Activated CD8-positive, alpha-beta T cell treated with anti-CD3 and anti-CD28 coated beads, Interleukin-2, amount 10 ng/mL, durations not matched to agents 7 days and 5 days (primary cell): ENCODE measurements at regions of chr7 and their contacts with region 1.

Region 1: GRCh38 chr7:6026011-6026819 is 5.0 kb upstream of the ANKRD61 start:
- DNase-seq: peak; percentile 86
- ATAC-seq: peak; percentile 99
- H3K4me3 Mint-ChIP-seq: peak overlapping the region; percentile 68
- H3K27ac Mint-ChIP-seq: peak overlapping the region; percentile 89
- H3K4me1 Mint-ChIP-seq: peaks cover 25% of the 10 kb centered on the region
- H3K27me3 Mint-ChIP-seq: no peaks in the 10 kb centered on the region

Region 2: GRCh38 chr7:5709347-5709950 is 316.8 kb before region 1 on chr7:
- CTCF ChIA-PET with region 1: no interaction called
- POLR2A ChIA-PET with region 1: no interaction called
- DNase-seq: no peak
- ATAC-seq: no peak
- H3K4me3 Mint-ChIP-seq: no peak overlapping the region
- H3K27ac Mint-ChIP-seq: no peak overlapping the region
- H3K4me1 Mint-ChIP-seq: no peaks in the 10 kb centered on the region
- H3K27me3 Mint-ChIP-seq: no peaks in the 10 kb centered on the region

Region 3: DNA sequence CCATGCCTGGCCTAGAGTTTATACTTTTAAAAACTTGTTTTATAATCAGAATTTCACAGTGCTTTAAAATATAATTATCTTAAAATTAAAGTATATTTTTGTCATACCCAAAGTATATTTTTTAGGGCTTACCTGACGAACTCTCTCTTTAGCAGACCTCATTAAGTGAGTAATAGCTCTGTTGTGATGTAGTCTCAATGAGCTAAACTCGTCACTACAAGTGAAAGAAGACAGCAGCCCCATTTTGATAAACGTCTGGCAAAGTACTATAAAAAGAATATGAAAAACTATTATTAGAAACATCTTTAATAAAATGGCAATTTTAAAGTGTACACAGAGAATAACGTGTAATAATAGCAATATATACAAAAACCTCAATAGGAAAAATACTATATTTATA is 23.6 kb after region 1 on chr7:
- CTCF ChIA-PET with region 1: interaction called, 11 read pairs
- POLR2A ChIA-PET with region 1: no interaction called
- DNase-seq: no peak
- ATAC-seq: no peak
- H3K4me3 Mint-ChIP-seq: no peak overlapping the region
- H3K27ac Mint-ChIP-seq: no peak overlapping the region
- H3K4me1 Mint-ChIP-seq: peaks cover 1% of the 10 kb centered on the region
- H3K27me3 Mint-ChIP-seq: no peaks in the 10 kb centered on the region